Uterus (tissue), 4 donors: ENCODE measurements at regions of chr17 and their contacts with region 1.

Region 1: GRCh38 chr17:32783602-32784001 is 93.3 kb downstream of the MYO1D start:
- DNase-seq: no peak
- H3K4me3 ChIP-seq: no peak overlapping the region
- H3K27ac ChIP-seq: no peak overlapping the region
- H3K4me1 ChIP-seq: no peaks in the 10 kb centered on the region
- H3K27me3 ChIP-seq: no peaks in the 10 kb centered on the region
- CTCF ChIP-seq: peak; percentile 73 to 90 (median 80)
- POLR2A ChIP-seq: no peak

Region 2: DNA sequence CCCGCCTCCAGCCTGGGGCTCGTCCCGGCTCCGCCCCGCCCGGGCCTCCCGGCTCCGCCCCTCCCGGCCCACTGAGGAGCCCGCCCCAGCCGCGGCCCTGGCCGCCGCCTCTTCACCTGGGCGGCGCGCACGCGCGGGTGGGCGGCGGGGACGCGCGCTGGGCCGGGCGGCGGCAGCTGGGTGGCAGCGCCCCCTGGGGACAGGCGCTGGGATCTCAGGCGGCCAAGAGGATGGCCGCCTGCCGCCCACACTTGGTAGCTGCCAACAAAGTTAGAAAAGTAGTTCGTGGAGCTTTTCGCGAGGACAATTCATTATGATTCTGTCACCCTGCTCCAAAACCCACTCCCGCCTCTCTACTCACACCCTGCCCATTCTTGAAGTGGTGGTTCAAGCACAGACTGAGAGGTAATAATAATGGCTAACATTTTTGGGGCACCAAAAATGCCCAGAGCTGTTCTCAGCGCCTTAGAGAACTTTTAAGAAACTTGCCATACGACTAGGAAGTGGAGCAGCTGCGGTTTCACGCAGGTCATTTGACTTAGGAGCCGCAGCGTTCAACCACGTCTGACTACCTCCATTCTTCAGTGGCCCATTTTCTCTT is 93.7 kb after region 1 on chr17:
- intact Hi-C with region 1: loop called (anchors 2 kb)
- DNase-seq: peak; percentile 89 to 95
- H3K4me3 ChIP-seq: peak overlapping the region; percentile 63 to 87
- H3K27ac ChIP-seq: peak overlapping the region; percentile 90 to 94
- H3K4me1 ChIP-seq: peaks cover 0 to 3% of the 10 kb centered on the region in 2 donors
- H3K27me3 ChIP-seq: no peaks in the 10 kb centered on the region
- CTCF ChIP-seq: peak; percentile 74 to 100 (median 94)
- POLR2A ChIP-seq: no peak